Psoas muscle (tissue), 8 donors: ENCODE measurements at regions of chr6 and their contacts with region 1.

Region 1: GRCh38 chr6:118748311-118749062 is 97.1 kb upstream of the CEP85L start:
- DNase-seq: peak; percentile 69 to 85
- ATAC-seq: peak; percentile 74 to 83 (median 82)
- H3K4me3 ChIP-seq: peak overlapping the region; percentile 37
- H3K27ac ChIP-seq: peak overlapping the region; percentile 81
- H3K4me1 ChIP-seq: peaks cover 43% of the 10 kb centered on the region
- H3K27me3 ChIP-seq: no peaks in the 10 kb centered on the region
- CTCF ChIP-seq: no peak

Region 2: GRCh38 chr6:118668761-118669385 is 79.6 kb before region 1 on chr6:
- intact Hi-C with region 1: loop called in 1 of 2 experiments (anchors 5 kb)
- DNase-seq: no peak
- ATAC-seq: peak; percentile 93 to 96 (median 93)
- H3K4me3 ChIP-seq: peak overlapping the region; percentile 23
- H3K27ac ChIP-seq: peak overlapping the region; percentile 84
- H3K4me1 ChIP-seq: peaks cover 49% of the 10 kb centered on the region
- H3K27me3 ChIP-seq: no peaks in the 10 kb centered on the region
- CTCF ChIP-seq: no peak

Region 3: GRCh38 chr6:118679327-118679901 is 69.1 kb before region 1 on chr6:
- intact Hi-C with region 1: no loop called
- DNase-seq: no peak
- ATAC-seq: peak in 2 of 4 donors; percentile 76 to 78
- H3K4me3 ChIP-seq: no peak overlapping the region
- H3K27ac ChIP-seq: no peak overlapping the region
- H3K4me1 ChIP-seq: peaks cover 11% of the 10 kb centered on the region
- H3K27me3 ChIP-seq: no peaks in the 10 kb centered on the region
- CTCF ChIP-seq: no peak

Region 4: GRCh38 chr6:118715376-118715775 is 33.1 kb before region 1 on chr6:
- intact Hi-C with region 1: no loop called
- DNase-seq: no peak
- ATAC-seq: no peak
- H3K4me3 ChIP-seq: no peak overlapping the region
- H3K27ac ChIP-seq: no peak overlapping the region
- H3K4me1 ChIP-seq: peaks cover 5% of the 10 kb centered on the region
- H3K27me3 ChIP-seq: no peaks in the 10 kb centered on the region
- CTCF ChIP-seq: no peak

Region 5: DNA sequence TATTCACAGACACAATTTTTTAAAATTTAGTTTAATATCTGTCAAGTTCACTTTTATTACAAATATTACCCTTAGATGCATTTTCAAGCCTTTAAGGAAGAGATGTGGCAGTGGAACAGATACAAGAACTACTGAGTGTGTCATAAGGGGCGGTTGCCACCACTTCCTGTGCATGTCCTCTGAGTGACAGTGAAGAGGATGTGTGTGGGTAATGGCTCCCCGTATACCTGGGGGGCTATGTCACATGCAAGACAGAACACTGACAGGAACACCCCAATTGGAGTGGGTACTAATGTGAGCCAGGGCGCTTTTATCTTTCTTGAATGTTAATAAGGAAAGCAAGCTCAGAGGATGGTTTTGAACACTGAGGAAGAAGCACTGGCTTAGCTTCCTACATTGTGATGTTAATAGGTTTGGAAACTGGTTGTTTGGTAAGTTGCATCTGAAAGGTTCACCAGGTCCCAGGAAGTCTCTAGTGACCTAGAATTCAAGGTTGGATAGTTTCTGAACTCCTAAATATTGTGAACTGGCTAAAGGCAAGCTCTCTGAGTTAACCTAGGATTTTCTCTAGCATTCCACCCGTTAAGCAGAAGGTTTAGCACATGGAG is 62.0 kb after region 1 on chr6:
- intact Hi-C with region 1: no loop called
- DNase-seq: no peak
- ATAC-seq: no peak
- H3K4me3 ChIP-seq: no peak overlapping the region
- H3K27ac ChIP-seq: no peak overlapping the region
- H3K4me1 ChIP-seq: no peaks in the 10 kb centered on the region
- H3K27me3 ChIP-seq: no peaks in the 10 kb centered on the region
- CTCF ChIP-seq: no peak